Breast epithelium (tissue), 4 donors: ENCODE measurements at regions of chr19 and their contacts with region 1.

Region 1: GRCh38 chr19:18785179-18786128 is 5.7 kb downstream of the COMP start:
- DNase-seq: peak in 1 of 2 donors; percentile 70
- H3K4me3 ChIP-seq: peak overlapping the region in 2 of 3 donors; percentile 18 to 46
- H3K27ac ChIP-seq: no peak overlapping the region
- H3K4me1 ChIP-seq: peaks cover 7 to 16% of the 10 kb centered on the region in 2 donors
- H3K27me3 ChIP-seq: peaks cover 25 to 47% of the 10 kb centered on the region in 2 donors
- CTCF ChIP-seq: no peak
- POLR2A ChIP-seq: no peak

Region 2: GRCh38 chr19:18749362-18750231 is 35.9 kb before region 1 on chr19:
- intact Hi-C with region 1: loop called (anchors 1 kb)
- DNase-seq: no peak
- H3K4me3 ChIP-seq: no peak overlapping the region
- H3K27ac ChIP-seq: no peak overlapping the region
- H3K4me1 ChIP-seq: no peaks in the 10 kb centered on the region
- H3K27me3 ChIP-seq: no peaks in the 10 kb centered on the region
- CTCF ChIP-seq: no peak
- POLR2A ChIP-seq: no peak